Mammary epithelial cell (primary cell): ENCODE measurements at regions of chr3 and their contacts with region 1.

Region 1: GRCh38 chr3:183635431-183636220 is at the start of gene KLHL24:
- DNase-seq: peak; percentile 88
- H3K4me3 ChIP-seq: peak within 1 kb of the TSS; percentile 79 to 98 (median 94)
- H3K27ac ChIP-seq: peak within 1 kb of the TSS; percentile 62
- H3K4me1 ChIP-seq: peaks cover 4% of the 10 kb centered on the region
- H3K27me3 ChIP-seq: no peaks in the 10 kb centered on the region
- CTCF ChIP-seq: no peak
- total RNA-seq, gene KLHL24: 10.2 to 100 TPM

Region 2: DNA sequence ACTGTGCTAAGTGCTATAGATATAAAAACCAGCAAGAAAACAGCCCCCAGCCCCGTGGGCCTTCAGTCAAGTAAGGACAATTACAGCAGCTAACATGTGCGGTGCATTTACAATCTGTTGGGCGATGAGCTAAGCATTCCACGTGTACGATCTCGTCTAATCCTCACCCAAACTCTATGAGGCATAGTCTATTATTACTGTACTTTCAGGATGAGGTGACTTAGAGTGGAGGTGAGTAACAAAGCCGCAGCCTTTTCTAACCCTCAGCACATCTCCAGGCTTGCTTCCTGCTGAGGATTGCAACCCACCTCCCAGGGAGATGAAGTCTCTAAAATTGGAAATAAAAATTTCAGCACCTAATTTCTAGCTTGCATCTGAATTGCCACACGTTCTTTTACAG is 154.0 kb before region 1 on chr3:
- CTCF ChIA-PET with region 1: no interaction called
- dilution Hi-C with region 1: no loop called
- in situ Hi-C with region 1: no loop called
- intact Hi-C with region 1: loop called (anchors 5 kb)
- DNase-seq: peak; percentile 92
- H3K4me3 ChIP-seq: no peak overlapping the region
- H3K27ac ChIP-seq: peak overlapping the region; percentile 4
- H3K4me1 ChIP-seq: no peaks in the 10 kb centered on the region
- H3K27me3 ChIP-seq: no peaks in the 10 kb centered on the region
- CTCF ChIP-seq: no peak